CD4-positive, alpha-beta memory T cell (primary cell): ENCODE measurements at regions of chr10 and their contacts with region 1.

Region 1: GRCh38 chr10:89643431-89644331 is 1.4 kb downstream of the PANK1 start:
- DNase-seq: peak; percentile 74 to 82 (median 75)
- H3K4me3 ChIP-seq: peak overlapping the region; percentile 55 to 75
- H3K4me3 Mint-ChIP-seq: no peak overlapping the region
- H3K27ac ChIP-seq: peak overlapping the region; percentile 43
- H3K27ac Mint-ChIP-seq: no peak overlapping the region
- H3K4me1 ChIP-seq: peaks cover 16% of the 10 kb centered on the region
- H3K4me1 Mint-ChIP-seq: peaks cover 8 to 11% (median 10%) of the 10 kb centered on the region in 4 donors
- H3K27me3 ChIP-seq: no peaks in the 10 kb centered on the region
- H3K27me3 Mint-ChIP-seq: peaks cover 3 to 4% of the 10 kb centered on the region in 2 donors

Region 2: DNA sequence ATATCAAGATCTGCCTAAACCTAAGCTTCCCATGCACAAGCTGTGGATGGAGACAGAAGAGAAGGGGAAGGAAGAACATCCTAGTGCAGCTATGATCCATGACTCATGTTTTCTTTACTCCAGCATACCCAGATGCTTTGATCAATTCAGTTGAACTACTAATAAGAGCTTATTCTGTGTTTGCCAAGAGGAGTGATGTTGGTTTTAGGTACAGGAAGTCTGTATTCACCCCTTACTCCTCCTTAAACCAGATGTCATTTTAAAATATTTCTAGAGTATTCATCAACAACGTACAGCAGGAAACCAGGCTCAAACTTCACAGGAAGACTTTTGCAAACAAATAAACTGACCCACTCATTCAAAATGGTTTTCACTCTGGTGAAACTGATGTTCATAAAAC is 27.9 kb before region 1 on chr10:
- CTCF ChIA-PET with region 1: interaction called, 3 read pairs
- POLR2A ChIA-PET with region 1: interaction called, 7 read pairs
- intact Hi-C with region 1: loop called (anchors 2 kb)
- DNase-seq: peak in 3 of 5 donors; percentile 8 to 13 (median 8)
- H3K4me3 ChIP-seq: no peak overlapping the region
- H3K4me3 Mint-ChIP-seq: peak overlapping the region in 6 of 8 donors; percentile 52 to 76 (median 69)
- H3K27ac ChIP-seq: no peak overlapping the region
- H3K27ac Mint-ChIP-seq: peak overlapping the region; percentile 48 to 93 (median 73)
- H3K4me1 ChIP-seq: peaks cover 39% of the 10 kb centered on the region
- H3K4me1 Mint-ChIP-seq: peaks cover 27 to 59% (median 32%) of the 10 kb centered on the region in 4 donors
- H3K27me3 ChIP-seq: no peaks in the 10 kb centered on the region
- H3K27me3 Mint-ChIP-seq: no peaks in the 10 kb centered on the region